Activated CD4-positive, alpha-beta memory T cell treated with anti-CD3 and anti-CD28 coated beads for 36 hours (primary cell): ENCODE measurements at regions of chr17 and their contacts with region 1.

Region 1: DNA sequence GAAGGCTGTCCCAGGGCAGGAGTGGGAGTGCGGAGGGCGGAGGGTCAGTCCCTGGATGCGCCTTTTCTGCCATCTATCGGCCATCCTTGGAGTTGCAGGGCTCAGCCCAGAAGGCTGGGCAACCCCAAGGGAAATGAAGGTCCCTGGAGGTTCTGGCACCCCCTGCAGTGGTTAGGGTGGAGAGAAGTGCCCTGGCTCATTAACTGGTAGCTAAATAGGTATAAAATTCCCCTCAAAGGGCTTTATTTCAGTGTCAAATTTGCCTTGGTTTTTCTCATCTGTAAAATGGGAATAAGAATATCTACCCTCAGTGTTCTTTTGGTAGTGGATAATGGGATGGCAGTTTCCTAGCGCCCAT is 22.4 kb downstream of the C17orf75 start:
- DNase-seq: peak; percentile 87
- H3K4me3 Mint-ChIP-seq: peak overlapping the region; percentile 51
- H3K27ac Mint-ChIP-seq: no peak overlapping the region
- H3K4me1 Mint-ChIP-seq: peaks cover 13% of the 10 kb centered on the region
- H3K27me3 Mint-ChIP-seq: peaks cover 8% of the 10 kb centered on the region

Region 2: DNA sequence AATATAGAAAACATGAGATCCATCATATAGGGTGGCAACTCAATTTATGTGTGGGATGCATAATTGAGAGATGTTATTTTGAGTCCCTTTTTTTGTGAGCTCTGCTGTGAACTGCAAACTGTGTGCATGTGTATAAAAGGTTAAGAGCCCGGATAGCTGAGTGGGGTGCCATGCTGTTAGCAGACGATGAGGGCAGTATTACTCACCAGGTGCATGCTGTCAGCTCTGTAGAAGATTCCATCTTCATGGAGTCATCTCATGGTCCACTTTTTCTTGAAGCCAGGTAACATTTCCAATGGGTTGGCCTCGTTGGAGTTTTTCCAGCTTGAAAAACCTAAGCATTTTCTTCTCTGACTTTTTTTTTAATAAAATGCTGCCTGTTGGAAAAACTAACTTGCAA is 96.9 kb before region 1 on chr17:
- CTCF ChIA-PET with region 1: interaction called, 19 read pairs
- POLR2A ChIA-PET with region 1: no interaction called
- intact Hi-C with region 1: no loop called
- DNase-seq: no peak
- H3K4me3 Mint-ChIP-seq: no peak overlapping the region
- H3K27ac Mint-ChIP-seq: no peak overlapping the region
- H3K4me1 Mint-ChIP-seq: peaks cover 36% of the 10 kb centered on the region
- H3K27me3 Mint-ChIP-seq: no peaks in the 10 kb centered on the region

Region 3: DNA sequence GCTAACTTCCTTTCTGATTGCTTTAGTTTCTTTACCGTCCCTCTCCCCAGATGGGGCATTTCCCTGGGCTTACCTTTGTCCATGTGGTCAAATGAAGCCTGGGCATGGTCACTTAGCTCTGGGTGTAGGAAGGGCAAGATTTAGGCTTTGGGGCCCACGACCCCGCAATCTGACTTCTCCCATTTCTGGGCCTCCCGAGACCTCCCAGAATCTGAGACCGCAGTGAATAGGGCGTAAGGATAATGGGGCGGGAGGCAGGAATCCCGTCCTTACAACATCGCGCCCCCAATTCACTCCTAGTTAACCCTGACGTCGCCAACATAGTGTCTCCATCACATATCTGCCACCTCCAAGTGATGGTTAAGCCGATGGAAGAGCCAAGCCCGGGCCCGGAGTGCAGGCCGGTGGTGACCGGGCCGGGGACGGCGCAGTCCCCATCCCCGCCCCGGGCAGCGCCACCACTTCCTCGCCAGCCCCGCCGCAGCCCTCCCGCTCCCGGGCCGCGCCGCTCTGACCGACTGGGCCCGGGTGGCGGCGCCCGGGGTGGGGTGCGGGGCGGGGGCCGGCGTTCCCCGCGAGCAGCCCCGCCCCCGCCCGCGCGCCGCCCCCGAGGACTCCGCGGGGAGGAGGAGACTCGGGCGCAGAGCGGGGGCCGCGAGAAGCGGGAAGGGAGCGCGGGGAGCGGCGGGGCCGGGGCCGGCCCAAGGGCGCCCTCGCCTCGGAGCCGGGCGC is 54.2 kb before region 1 on chr17 and contains the start of gene RHBDL3:
- CTCF ChIA-PET with region 1: interaction called, 6 read pairs
- POLR2A ChIA-PET with region 1: no interaction called
- intact Hi-C with region 1: loop called (anchors 5 kb)
- DNase-seq: no peak
- H3K4me3 Mint-ChIP-seq: peak within 1 kb of the TSS; percentile 58
- H3K27ac Mint-ChIP-seq: no peak within 1 kb of the TSS
- H3K4me1 Mint-ChIP-seq: peaks cover 14% of the 10 kb centered on the region
- H3K27me3 Mint-ChIP-seq: peaks cover 50% of the 10 kb centered on the region
- total RNA-seq, gene RHBDL3: 0.17 TPM in 1 of 2 experiments, not detected in the other

Region 4: GRCh38 chr17:32288615-32289014 is 30.9 kb before region 1 on chr17:
- CTCF ChIA-PET with region 1: no interaction called
- POLR2A ChIA-PET with region 1: no interaction called
- intact Hi-C with region 1: no loop called
- DNase-seq: no peak
- H3K4me3 Mint-ChIP-seq: no peak overlapping the region
- H3K27ac Mint-ChIP-seq: no peak overlapping the region
- H3K4me1 Mint-ChIP-seq: no peaks in the 10 kb centered on the region
- H3K27me3 Mint-ChIP-seq: peaks cover 4% of the 10 kb centered on the region